Sigmoid colon (tissue), 7 donors: ENCODE measurements at regions of chr1 and their contacts with region 1.

Region 1: DNA sequence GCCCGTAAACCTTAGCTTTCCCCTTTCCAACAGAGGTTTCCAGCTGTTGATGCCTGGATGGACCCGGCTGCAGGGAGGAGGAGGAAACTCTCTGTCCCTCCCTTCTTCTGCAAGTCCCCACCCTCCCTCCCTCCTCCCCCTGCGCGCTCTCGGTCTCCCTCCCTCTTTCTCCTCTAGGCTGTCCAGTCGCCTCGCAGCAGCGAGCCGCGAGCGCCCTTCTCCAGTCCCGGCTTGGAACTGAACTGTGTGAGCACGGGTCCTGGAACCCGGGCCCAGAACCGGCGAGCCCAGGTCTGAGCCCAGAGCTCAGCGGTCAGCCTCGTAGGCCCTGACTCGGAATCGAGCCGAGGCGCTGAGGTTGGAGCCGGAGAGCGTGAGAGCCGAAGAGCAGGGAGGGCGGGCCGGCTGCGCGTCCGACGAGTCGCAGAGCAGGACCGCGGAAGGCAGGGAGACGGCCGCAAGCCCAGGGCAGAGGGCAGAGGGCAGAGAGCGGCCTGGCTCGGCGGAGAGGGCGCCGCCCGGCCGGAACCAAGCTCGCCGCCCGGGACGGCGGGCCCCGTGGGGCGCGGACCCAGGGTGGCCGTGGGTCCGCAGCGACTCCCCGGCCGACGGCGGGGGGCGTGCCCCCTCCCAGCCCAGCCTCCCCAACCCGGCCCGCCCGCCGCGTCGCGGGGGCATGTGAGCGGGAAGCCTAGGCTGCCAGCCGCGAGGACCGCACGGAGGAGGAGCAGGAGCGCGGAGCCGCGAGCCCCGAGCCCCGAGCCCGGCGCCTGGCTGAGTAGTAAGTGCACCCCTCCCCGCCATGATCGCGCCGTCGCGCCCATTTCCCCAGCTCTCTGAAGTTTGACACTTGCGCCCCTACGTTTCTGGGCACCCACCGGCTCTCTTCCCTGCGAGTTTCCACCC is at the start of gene SOX13:
- DNase-seq: peak; percentile 97
- H3K4me3 ChIP-seq: peak within 1 kb of the TSS; percentile 81 to 92 (median 86)
- H3K27ac ChIP-seq: peak within 1 kb of the TSS; percentile 83 to 96 (median 94)
- H3K4me1 ChIP-seq: peaks cover 0 to 34% (median 31%) of the 10 kb centered on the region in 4 donors
- H3K27me3 ChIP-seq: no peaks in the 10 kb centered on the region
- CTCF ChIP-seq: no peak
- EP300 ChIP-seq: no peak
- POLR2A ChIP-seq: peak; percentile 96
- total RNA-seq, gene SOX13: 28.5 to 58.4 (median 30.0) TPM

Region 2: GRCh38 chr1:203823306-203823705 is 249.9 kb before region 1 on chr1:
- intact Hi-C with region 1: no loop called
- DNase-seq: no peak
- H3K4me3 ChIP-seq: no peak overlapping the region
- H3K27ac ChIP-seq: no peak overlapping the region
- H3K4me1 ChIP-seq: peaks cover 0 to 8% (median 2%) of the 10 kb centered on the region in 4 donors
- H3K27me3 ChIP-seq: no peaks in the 10 kb centered on the region
- CTCF ChIP-seq: no peak
- EP300 ChIP-seq: no peak
- POLR2A ChIP-seq: no peak

Region 3: GRCh38 chr1:203871107-203871875 is 201.9 kb before region 1 on chr1:
- intact Hi-C with region 1: loop called (anchors 2 kb)
- DNase-seq: peak; percentile 69
- H3K4me3 ChIP-seq: peak overlapping the region in 1 of 4 donors; percentile 2
- H3K27ac ChIP-seq: peak overlapping the region in 3 of 4 donors; percentile 77 to 80 (median 77)
- H3K4me1 ChIP-seq: peaks cover 0 to 25% (median 22%) of the 10 kb centered on the region in 4 donors
- H3K27me3 ChIP-seq: no peaks in the 10 kb centered on the region
- CTCF ChIP-seq: peak; percentile 85 to 98 (median 96)
- EP300 ChIP-seq: no peak
- POLR2A ChIP-seq: no peak

Region 4: GRCh38 chr1:204089044-204089751 is 16.0 kb after region 1 on chr1:
- intact Hi-C with region 1: loop called (anchors 2 kb)
- DNase-seq: peak; percentile 97
- H3K4me3 ChIP-seq: peak overlapping the region in 3 of 4 donors; percentile 27 to 36 (median 33)
- H3K27ac ChIP-seq: peak overlapping the region; percentile 81 to 98 (median 96)
- H3K4me1 ChIP-seq: peaks cover 0 to 98% (median 94%) of the 10 kb centered on the region in 4 donors
- H3K27me3 ChIP-seq: no peaks in the 10 kb centered on the region
- CTCF ChIP-seq: no peak
- EP300 ChIP-seq: peak; percentile 85 to 96 (median 89)
- POLR2A ChIP-seq: no peak